ENCODE measurements at regions of chr6 and their contacts with region 1.

Region 1: DNA sequence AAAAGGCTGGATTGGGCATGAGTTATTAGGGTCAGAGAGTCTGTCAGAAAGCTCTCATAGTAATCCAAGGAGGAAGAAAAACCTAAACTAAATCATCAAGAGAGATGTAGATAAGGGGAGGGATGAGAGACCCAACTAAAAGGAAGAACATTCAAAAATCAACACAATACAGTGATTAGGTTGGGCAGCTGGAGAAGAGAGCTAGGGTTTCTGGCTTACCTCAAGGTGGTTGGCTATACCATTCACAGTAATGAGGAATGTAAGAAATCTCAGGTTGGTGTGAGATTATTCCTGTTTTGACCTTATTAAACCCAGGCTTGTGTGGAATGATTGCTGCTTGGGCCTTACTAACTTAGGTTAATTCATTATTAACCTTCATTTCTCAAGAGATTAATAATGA is 6.2 kb upstream of the COX7A2 start:
- DNase-seq: no peak
- ATAC-seq: no peak
- H3K4me3 Mint-ChIP-seq: no peak overlapping the region
- H3K27ac Mint-ChIP-seq: no peak overlapping the region
- H3K4me1 Mint-ChIP-seq: peaks cover 5% of the 10 kb centered on the region
- H3K27me3 Mint-ChIP-seq: peaks cover 14% of the 10 kb centered on the region

Region 2: DNA sequence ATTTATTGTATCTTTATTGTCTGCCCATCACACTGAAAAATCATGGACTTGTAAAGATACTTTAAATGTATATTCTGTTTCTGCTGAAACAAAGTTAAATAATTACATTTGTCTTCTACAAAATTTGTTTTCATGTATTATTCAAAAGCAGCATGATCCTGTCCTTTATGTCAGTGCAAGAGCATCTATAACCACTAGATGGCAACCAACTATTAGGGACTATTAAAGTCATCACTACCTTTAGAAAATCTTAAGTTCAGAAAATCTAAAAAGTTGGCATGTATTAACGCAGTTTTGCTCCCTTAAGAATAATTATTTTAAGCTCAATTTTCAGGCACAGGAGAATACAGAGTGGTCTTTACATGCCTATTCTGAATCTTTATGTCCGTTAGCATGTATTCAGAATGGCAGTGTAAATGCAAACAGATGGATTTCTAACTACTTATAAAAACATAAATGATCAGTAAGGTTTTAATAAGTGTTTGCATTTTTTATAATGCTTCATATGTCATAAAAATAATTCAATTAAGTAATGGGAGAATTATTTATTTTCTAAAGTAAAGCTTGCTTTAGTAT is 17.0 kb after region 1 on chr6:
- CTCF ChIA-PET with region 1: interaction called, 10 read pairs
- DNase-seq: no peak
- ATAC-seq: peak; percentile 61
- H3K4me3 Mint-ChIP-seq: no peak overlapping the region
- H3K27ac Mint-ChIP-seq: no peak overlapping the region
- H3K4me1 Mint-ChIP-seq: peaks cover 24% of the 10 kb centered on the region
- H3K27me3 Mint-ChIP-seq: no peaks in the 10 kb centered on the region

Measured in activated CD8-positive, alpha-beta memory T cell treated with anti-CD3 and anti-CD28 coated beads, Interleukin-2, amount 10 ng/mL, durations not matched to agents 7 days and 5 days (primary cell).